Activated T-helper 1 cell treated with anti-CD3 and anti-CD28 coated beads, Interleukin-12 subunit alpha, Interleukin-12 subunit beta, Interleukin-2, Interleukin-4 antibody, amounts not matched to agents 30 ng/mL and 10 ng/mL and 1 ng/mL, durations not matched to agents 14 hours and 24 hours and 36 hours (primary cell): ENCODE measurements at regions of chr16 and their contacts with region 1.

Region 1: GRCh38 chr16:63410594-63410993 is 1374.4 kb upstream of the CDH8 start:
- DNase-seq: no peak
- H3K4me3 Mint-ChIP-seq: no peak overlapping the region
- H3K27ac Mint-ChIP-seq: no peak overlapping the region
- H3K4me1 Mint-ChIP-seq: no peaks in the 10 kb centered on the region
- H3K27me3 Mint-ChIP-seq: no peaks in the 10 kb centered on the region

Region 2: DNA sequence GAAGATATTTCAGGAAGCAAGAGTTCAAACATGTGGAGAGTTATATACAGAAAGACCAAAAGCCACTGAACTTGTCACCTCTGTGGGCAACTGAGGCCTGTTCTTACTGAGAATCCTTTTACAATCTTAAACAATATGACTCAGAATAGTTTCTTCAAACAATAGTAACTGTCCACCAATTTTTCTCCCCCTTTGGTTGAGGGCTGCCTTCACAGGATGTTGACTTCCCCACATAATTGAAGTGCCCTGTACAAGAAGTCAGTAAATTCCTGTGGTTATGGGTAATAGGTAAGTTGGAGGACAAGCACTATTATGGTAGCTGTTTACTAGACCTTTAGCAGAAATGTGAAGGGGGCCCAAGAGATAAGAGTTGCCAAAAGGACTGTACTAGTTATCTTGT is 1590.2 kb before region 1 on chr16:
- intact Hi-C with region 1: loop called (anchors 5 kb)
- DNase-seq: no peak
- H3K4me3 Mint-ChIP-seq: no peak overlapping the region
- H3K27ac Mint-ChIP-seq: no peak overlapping the region
- H3K4me1 Mint-ChIP-seq: no peaks in the 10 kb centered on the region
- H3K27me3 Mint-ChIP-seq: no peaks in the 10 kb centered on the region